ENCODE measurements at regions of chr3 and their contacts with region 1.

Region 1: GRCh38 chr3:99023590-99024192 is 122.2 kb upstream of the DCBLD2 start:
- DNase-seq: no peak
- ATAC-seq: no peak
- H3K4me3 ChIP-seq: no peak overlapping the region
- H3K27ac ChIP-seq: no peak overlapping the region
- H3K4me1 ChIP-seq: no peaks in the 10 kb centered on the region
- H3K27me3 ChIP-seq: no peaks in the 10 kb centered on the region

Region 2: DNA sequence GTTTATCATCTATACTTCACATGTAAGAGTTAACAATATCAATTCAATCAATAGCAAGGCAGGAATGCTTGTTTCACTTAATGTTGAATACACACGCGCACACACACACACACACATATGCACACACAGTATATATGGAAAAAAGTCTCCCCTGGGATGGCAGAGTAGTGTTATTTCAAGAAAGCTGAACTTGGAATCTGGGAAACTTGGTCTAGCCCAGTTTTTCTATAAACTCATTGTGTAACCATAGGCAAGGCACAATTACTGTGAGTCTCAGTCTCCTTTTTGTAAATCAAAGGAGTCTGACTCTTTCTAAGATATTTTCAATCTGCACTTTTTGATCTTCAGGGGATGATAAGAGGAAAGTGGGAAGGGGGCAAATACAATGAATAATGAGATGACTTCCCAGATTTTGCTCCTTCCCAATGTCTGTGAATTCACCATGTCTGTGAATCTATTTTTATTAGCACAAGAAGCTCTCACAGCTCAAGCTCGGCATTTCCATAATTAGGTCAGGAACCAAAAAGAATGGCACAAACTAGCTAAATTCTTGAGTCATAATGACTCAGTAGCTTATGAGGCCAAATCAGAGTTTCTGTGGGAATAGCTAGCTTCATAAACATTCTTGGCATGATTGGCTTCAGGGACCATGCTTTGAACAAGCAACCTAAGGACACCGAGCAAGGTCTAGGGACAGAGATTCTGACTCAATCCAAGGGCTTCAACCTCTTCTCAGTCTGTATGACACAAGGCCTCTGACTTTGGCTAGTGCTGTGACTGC is 105.2 kb after region 1 on chr3:
- intact Hi-C with region 1: no loop called
- DNase-seq: no peak
- ATAC-seq: peak; percentile 89 to 90
- H3K4me3 ChIP-seq: no peak overlapping the region
- H3K27ac ChIP-seq: no peak overlapping the region
- H3K4me1 ChIP-seq: no peaks in the 10 kb centered on the region
- H3K27me3 ChIP-seq: no peaks in the 10 kb centered on the region

Region 3: GRCh38 chr3:99172736-99173657 is 149.3 kb after region 1 on chr3:
- intact Hi-C with region 1: loop called in 1 of 4 experiments (anchors 5 kb)
- DNase-seq: peak in 2 of 3 donors; percentile 29 to 55
- ATAC-seq: peak in 1 of 2 donors; percentile 40
- H3K4me3 ChIP-seq: no peak overlapping the region
- H3K27ac ChIP-seq: no peak overlapping the region
- H3K4me1 ChIP-seq: no peaks in the 10 kb centered on the region
- H3K27me3 ChIP-seq: no peaks in the 10 kb centered on the region

Region 4: DNA sequence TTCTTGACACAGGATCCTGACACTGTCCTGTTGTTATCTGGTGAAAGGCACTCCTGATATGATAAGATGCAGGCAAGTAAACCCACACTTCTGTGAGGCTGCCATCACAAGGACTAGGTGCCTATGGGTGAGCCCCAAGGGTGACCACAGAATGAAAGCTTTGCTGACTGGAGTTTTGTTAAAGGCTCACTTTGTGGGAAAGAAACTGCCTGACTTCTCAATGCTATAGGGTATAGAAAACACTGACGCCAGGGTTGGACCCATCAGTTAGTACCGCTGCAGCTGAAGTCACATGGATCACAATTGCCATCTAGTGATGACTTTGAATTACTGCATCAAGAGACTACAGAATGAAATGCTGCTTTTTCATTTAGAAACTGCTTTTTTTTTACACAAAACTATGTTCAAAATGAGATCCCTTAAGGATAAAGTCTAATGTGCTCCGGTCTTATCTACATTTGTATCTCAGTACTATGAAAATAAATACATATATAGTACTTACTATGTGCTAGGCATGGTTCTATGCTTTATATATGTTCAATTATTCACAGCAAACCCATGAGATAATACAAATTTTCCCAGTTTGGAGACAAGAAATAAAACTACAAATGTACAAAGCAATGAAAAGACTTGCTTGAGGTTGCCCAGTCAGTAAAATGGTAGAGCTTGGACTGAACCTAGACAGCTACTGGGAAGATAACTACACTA is 729.7 kb after region 1 on chr3:
- intact Hi-C with region 1: loop called in 3 of 4 experiments (anchors 5 to 10 kb)
- DNase-seq: peak in 1 of 3 donors; percentile 28
- ATAC-seq: peak; percentile 86 to 89
- H3K4me3 ChIP-seq: no peak overlapping the region
- H3K27ac ChIP-seq: no peak overlapping the region
- H3K4me1 ChIP-seq: peaks cover 4% of the 10 kb centered on the region
- H3K27me3 ChIP-seq: no peaks in the 10 kb centered on the region